Activated CD4-positive, alpha-beta T cell treated with anti-CD3 and anti-CD28 coated beads for 36 hours (primary cell): ENCODE measurements at regions of chr7 and their contacts with region 1.

Region 1: DNA sequence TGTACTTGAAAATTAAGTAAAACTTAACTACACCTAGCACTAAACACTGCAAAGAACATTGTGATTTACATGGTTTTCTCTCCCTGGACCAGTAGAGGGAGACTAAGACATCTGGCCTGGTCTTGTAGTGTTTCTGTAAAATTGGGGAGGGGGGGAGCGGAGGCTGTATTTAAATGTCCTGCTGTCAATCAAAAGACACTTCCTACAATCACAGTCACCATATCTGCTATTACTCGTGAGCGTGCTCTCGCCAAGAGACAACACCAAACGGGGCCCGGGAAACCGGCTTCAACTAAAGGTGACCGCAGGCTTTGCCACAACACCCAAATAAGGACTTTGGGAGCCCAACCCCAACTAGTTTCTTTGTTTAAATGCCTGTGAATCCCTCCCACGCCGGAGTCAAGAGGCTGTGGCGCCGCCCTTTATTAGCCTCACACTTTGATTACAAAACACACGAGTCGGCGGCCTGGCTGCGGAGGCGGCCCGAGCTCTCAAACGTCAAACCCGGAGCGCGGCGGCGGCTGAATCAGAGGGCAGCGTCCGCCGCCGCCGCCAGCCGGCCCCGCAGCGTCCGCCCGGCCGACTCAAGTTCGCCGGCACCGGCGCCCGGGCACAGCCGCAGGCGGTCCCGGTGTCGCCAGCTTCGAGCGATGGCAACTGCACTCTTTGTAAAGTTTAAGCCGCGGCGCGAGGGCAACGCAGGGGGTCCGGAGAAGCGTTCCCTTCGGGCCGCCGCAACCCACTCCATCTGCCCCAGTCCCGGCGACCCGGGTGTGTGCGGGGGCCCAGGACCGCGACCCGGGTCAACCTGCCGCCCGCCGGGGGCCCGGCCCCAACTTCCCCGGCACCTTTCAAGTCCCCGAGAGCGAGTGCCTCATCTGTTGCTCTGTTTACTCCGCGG is 1.3 kb downstream of the KDM7A start:
- DNase-seq: peak; percentile 95
- ATAC-seq: peak; percentile 70
- H3K4me3 Mint-ChIP-seq: peak overlapping the region; percentile 96
- H3K27ac Mint-ChIP-seq: peak overlapping the region; percentile 83
- H3K4me1 Mint-ChIP-seq: peaks cover 49% of the 10 kb centered on the region
- H3K27me3 Mint-ChIP-seq: peaks cover 3% of the 10 kb centered on the region

Region 2: GRCh38 chr7:139340037-139340807 is 835.2 kb before region 1 on chr7:
- CTCF ChIA-PET with region 1: no interaction called
- POLR2A ChIA-PET with region 1: no interaction called
- intact Hi-C with region 1: loop called (anchors 2 to 5 kb)
- DNase-seq: peak; percentile 99
- ATAC-seq: peak; percentile 79
- H3K4me3 Mint-ChIP-seq: peak overlapping the region; percentile 97
- H3K27ac Mint-ChIP-seq: peak overlapping the region; percentile 99
- H3K4me1 Mint-ChIP-seq: peaks cover 23% of the 10 kb centered on the region
- H3K27me3 Mint-ChIP-seq: peaks cover 2% of the 10 kb centered on the region

Region 3: DNA sequence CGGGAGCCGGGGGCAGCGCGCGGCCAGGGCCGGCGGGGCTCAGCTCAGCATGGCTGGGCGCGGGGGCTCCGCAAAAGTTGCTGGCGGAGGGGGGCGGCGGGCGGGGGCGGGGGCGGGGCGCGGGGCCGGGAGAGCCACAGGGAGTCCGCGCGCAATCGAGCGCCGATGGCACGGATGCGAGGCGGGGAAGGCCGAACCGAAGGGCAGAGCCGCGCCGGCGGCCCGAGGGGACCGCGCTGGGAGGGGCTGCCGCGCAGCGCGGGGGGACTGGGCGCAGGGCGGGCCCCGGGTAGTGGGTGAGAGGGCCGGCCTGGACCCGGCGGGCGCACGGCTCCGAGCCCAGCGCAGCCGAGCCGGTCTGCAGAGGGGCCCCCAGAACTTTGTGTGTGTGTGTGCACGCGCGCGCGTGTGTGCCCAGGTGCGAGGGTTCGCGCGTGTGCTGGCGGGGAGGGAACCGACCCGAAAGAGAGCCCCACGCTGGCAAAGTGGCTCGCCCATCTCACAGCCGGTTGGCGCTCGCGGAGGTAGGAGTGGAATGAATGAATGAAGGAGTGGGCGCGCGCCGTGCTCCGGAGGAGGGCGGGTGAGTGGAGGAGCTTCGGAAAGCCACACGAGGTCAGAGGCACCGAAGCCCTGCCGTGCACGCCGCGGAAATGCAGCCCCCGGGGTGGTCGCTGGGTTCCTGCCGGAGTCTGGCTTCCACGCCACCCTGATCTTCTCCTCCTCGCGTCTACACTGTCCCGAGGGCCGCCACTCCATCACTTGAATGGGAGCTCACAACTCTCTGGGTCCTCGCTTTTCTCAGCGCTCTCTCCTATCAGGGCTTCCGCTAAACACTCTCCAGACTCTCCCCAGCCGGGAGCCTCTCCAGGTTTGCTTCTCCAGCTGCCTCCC is 397.3 kb before region 1 on chr7 and contains the start of gene HIPK2:
- CTCF ChIA-PET with region 1: no interaction called
- POLR2A ChIA-PET with region 1: interaction called, 4 read pairs
- intact Hi-C with region 1: loop called in 1 of 2 experiments (anchors 5 kb)
- DNase-seq: peak; percentile 82
- ATAC-seq: peak; percentile 37
- H3K4me3 Mint-ChIP-seq: peak within 1 kb of the TSS; percentile 83
- H3K27ac Mint-ChIP-seq: peak within 1 kb of the TSS; percentile 93
- H3K4me1 Mint-ChIP-seq: peaks cover 41% of the 10 kb centered on the region
- H3K27me3 Mint-ChIP-seq: peaks cover 11% of the 10 kb centered on the region
- total RNA-seq, gene HIPK2: 23.9 to 36.2 TPM

Region 4: DNA sequence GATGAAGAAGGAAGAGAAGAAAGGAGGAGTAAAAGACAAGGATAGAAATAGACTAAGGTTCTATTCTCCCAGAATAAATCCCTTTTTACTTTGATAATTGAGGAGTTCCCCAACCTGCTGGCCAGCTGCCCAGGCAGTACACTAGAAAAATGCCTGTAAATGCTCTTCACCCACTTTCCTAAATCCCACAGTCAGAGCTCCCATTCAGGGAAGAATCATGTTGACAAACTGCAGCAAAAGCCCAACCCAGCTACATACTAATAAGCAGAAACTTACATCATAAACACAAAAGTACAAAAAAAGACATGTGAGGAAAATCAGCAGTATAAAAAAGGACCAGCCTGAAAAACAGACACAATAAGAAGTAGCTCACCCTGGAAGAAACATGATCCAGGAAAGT is 17.1 kb after region 1 on chr7:
- CTCF ChIA-PET with region 1: interaction called, 3 read pairs
- POLR2A ChIA-PET with region 1: interaction called, 6 read pairs
- intact Hi-C with region 1: loop called in 1 of 2 experiments (anchors 2 kb)
- DNase-seq: no peak
- ATAC-seq: no peak
- H3K4me3 Mint-ChIP-seq: no peak overlapping the region
- H3K27ac Mint-ChIP-seq: no peak overlapping the region
- H3K4me1 Mint-ChIP-seq: peaks cover 27% of the 10 kb centered on the region
- H3K27me3 Mint-ChIP-seq: no peaks in the 10 kb centered on the region

Region 5: DNA sequence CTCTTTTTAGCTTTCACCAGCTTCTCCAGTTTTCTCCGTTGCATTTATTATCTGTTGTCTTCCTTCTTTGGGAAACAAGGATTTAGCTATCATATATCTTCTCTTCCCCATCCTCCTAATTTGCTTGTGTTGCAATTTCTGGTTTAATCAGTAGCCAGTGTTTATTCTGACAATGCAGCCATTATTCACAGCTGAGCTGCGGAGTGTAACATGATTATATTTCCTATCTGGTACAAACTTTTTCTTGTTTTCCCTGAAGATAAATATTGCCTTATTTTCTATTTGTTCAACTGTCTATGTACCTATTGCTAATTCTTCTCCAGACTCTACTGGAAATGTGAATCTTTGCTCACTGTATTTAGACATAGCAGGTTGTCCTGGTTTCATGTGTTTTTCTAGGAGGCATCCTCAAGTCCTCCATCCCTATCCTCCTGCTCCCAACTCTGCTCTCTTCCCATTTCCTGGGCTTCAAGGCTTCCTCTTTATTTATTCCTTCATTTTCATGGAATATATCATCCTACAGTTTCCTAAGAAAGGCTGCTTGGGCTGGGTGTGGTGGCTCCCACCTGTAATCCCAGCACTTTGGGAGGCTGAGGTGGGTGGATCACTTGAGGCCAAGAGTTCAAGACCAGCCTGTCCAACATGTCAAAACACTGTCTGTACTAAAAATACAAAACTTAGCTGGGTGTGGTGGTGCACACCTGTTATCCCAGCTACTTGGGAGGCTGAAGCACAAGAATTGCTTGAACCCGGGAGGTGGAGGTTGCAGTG is 73.8 kb after region 1 on chr7:
- CTCF ChIA-PET with region 1: interaction called, 3 read pairs
- POLR2A ChIA-PET with region 1: interaction called, 10 read pairs
- intact Hi-C with region 1: loop called (anchors 1 to 5 kb)
- DNase-seq: no peak
- ATAC-seq: no peak
- H3K4me3 Mint-ChIP-seq: no peak overlapping the region
- H3K27ac Mint-ChIP-seq: no peak overlapping the region
- H3K4me1 Mint-ChIP-seq: peaks cover 20% of the 10 kb centered on the region
- H3K27me3 Mint-ChIP-seq: no peaks in the 10 kb centered on the region

Region 6: GRCh38 chr7:140375892-140376730 is 200.6 kb after region 1 on chr7:
- CTCF ChIA-PET with region 1: no interaction called
- POLR2A ChIA-PET with region 1: no interaction called
- intact Hi-C with region 1: loop called in 1 of 2 experiments (anchors 1 kb)
- DNase-seq: peak; percentile 45
- ATAC-seq: peak; percentile 90
- H3K4me3 Mint-ChIP-seq: peak overlapping the region; percentile 57
- H3K27ac Mint-ChIP-seq: peak overlapping the region; percentile 95
- H3K4me1 Mint-ChIP-seq: peaks cover 53% of the 10 kb centered on the region
- H3K27me3 Mint-ChIP-seq: no peaks in the 10 kb centered on the region

Region 7: GRCh38 chr7:140673063-140673773 is 497.7 kb after region 1 on chr7:
- CTCF ChIA-PET with region 1: no interaction called
- POLR2A ChIA-PET with region 1: no interaction called
- intact Hi-C with region 1: loop called in 1 of 2 experiments (anchors 10 kb)
- DNase-seq: peak; percentile 72
- ATAC-seq: peak; percentile 74
- H3K4me3 Mint-ChIP-seq: peak overlapping the region; percentile 85
- H3K27ac Mint-ChIP-seq: peak overlapping the region; percentile 87
- H3K4me1 Mint-ChIP-seq: peaks cover 35% of the 10 kb centered on the region
- H3K27me3 Mint-ChIP-seq: no peaks in the 10 kb centered on the region